ENCODE measurements at regions of chr7 and their contacts with region 1.

Region 1: GRCh38 chr7:47945261-47946001 is 2.8 kb downstream of the PKD1L1 start:
- DNase-seq: peak in 1 of 2 experiments; percentile 88
- H3K4me3 ChIP-seq: no peak overlapping the region
- H3K27ac ChIP-seq: no peak overlapping the region
- H3K4me1 ChIP-seq: peaks cover 0 to 9% (median 5%) of the 10 kb centered on the region in 4 experiments; a peak in 6 of 7 replicates
- H3K27me3 ChIP-seq: no peaks in the 10 kb centered on the region
- CTCF ChIP-seq: peak in 2 of 3 experiments; percentile 63 to 67; a peak in 3 of 4 replicates
- EP300 ChIP-seq: no peak
- POLR2A ChIP-seq: no peak
- RAD21 ChIP-seq: peak; percentile 75 to 79

Region 2: DNA sequence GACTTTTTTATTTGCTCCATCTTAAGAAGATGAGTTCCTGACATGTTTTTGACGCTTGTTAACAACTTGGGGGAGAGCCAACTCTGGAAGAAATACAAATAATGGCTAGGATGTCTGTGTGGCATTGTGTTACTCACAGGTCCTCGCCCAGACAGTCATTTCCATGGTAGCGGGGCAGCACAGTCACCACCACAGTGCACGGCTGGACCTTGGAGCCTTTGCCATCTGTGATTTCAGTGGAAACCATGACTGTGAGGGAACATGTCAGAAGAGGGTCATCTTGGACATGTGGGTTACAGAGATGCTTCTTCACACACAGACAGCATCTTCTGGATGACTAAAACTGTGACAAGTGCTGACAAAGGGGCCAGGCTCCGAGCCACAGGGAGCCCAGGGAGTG is 71.7 kb before region 1 on chr7:
- CTCF ChIA-PET with region 1: no interaction called
- POLR2A ChIA-PET with region 1: no interaction called
- DNase-seq: peak in 1 of 2 experiments; percentile 16
- H3K4me3 ChIP-seq: no peak overlapping the region
- H3K27ac ChIP-seq: no peak overlapping the region
- H3K4me1 ChIP-seq: no peaks in the 10 kb centered on the region; a peak in 2 of 7 replicates
- H3K27me3 ChIP-seq: no peaks in the 10 kb centered on the region
- CTCF ChIP-seq: no peak
- EP300 ChIP-seq: no peak
- POLR2A ChIP-seq: no peak
- RAD21 ChIP-seq: no peak

Region 3: DNA sequence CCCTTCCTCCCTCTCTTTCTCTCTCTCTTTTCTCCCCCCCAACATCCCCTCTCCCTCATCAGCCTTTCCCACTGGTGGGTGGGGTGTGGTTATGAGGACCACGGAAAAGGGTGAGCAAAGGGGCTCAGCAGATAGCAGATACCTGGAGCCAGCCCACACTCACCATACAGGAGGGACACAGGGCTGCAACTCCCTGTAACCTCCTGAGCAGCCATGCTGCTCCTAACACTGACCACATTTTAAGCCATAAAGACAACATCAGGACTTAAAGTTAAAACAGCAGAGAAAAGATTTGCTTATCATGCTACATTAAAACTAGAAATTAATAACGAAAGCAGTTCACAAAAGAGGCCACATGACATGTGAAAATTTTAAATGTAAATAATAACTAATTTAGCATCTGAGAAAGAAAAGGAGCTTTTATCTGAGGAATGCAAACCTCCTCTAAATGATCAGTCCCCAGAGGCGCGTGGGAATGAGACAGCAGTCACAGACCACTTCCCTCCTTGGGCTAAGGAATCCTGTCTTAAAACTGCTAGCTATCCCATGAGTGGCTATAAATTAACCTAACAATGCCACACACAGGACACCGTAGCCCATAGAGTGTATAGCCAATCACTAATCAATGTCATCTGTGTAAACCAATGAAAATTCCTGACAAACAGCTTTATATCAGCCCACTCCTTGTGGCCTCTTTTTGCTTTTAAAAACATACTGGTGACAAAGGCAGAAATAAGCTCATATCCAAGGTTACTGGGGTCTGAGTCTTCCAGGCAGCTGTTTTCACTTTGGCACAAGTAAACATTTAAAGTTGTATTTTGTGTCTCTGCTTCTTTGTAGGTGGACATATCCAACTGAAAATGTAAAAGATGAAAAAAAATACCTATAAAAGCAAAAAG is 30.5 kb before region 1 on chr7:
- CTCF ChIA-PET with region 1: interaction called, 17 read pairs
- POLR2A ChIA-PET with region 1: no interaction called
- DNase-seq: no peak
- H3K4me3 ChIP-seq: no peak overlapping the region
- H3K27ac ChIP-seq: no peak overlapping the region
- H3K4me1 ChIP-seq: peaks cover 0 to 8% (median 1%) of the 10 kb centered on the region in 4 experiments; a peak in 2 of 7 replicates
- H3K27me3 ChIP-seq: no peaks in the 10 kb centered on the region
- CTCF ChIP-seq: no peak
- EP300 ChIP-seq: no peak
- POLR2A ChIP-seq: no peak
- RAD21 ChIP-seq: no peak

Region 4: GRCh38 chr7:47932016-47932415 is 13.4 kb before region 1 on chr7:
- CTCF ChIA-PET with region 1: interaction called, 34 read pairs
- POLR2A ChIA-PET with region 1: interaction called, 4 read pairs
- DNase-seq: no peak
- H3K4me3 ChIP-seq: no peak overlapping the region
- H3K27ac ChIP-seq: no peak overlapping the region
- H3K4me1 ChIP-seq: no peaks in the 10 kb centered on the region; a peak in 1 of 7 replicates
- H3K27me3 ChIP-seq: no peaks in the 10 kb centered on the region
- CTCF ChIP-seq: no peak
- EP300 ChIP-seq: no peak
- POLR2A ChIP-seq: no peak
- RAD21 ChIP-seq: no peak

Region 5: GRCh38 chr7:47968847-47969774 is 23.7 kb after region 1 on chr7:
- CTCF ChIA-PET with region 1: interaction called, 16 read pairs
- POLR2A ChIA-PET with region 1: interaction called, 5 read pairs
- DNase-seq: peak; percentile 46 to 87
- H3K4me3 ChIP-seq: no peak overlapping the region
- H3K27ac ChIP-seq: no peak overlapping the region
- H3K4me1 ChIP-seq: no peaks in the 10 kb centered on the region
- H3K27me3 ChIP-seq: no peaks in the 10 kb centered on the region
- CTCF ChIP-seq: peak; percentile 76 to 95 (median 88)
- EP300 ChIP-seq: no peak
- POLR2A ChIP-seq: no peak
- RAD21 ChIP-seq: peak; percentile 83 to 84

Region 6: DNA sequence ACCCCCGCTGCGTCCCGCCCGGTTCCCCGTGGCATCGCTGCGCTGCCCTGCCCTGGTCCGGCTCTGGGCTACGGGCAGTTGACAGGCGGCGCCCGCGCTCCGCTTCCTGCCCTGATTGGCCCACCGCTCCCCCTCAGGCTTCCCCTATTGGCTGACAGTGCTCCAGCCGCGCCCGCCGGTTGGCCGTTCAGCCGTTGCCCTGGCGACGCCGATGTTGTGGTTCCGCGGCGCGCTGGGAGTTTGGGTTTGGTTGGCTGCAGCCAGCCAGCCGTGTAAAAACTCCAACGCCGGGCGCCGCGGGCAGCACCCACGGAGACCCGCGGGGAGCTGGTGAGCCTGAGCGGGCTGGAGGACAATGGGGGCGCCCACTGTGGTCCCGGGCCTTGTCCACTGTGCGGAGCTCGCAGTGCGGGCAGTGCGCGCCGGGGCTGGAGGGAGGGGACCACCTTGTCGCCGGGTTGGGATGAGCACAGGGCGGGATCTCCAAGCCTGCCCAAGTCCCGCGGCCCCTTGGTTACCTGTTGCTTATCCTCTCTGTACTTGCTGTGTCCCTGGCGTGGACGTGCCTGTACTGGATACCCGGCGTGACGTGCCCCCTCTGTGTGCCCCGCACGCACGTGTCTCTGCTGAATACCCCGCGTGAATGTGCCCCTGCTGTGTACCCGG is 90.0 kb after region 1 on chr7 and contains the start of gene C7orf57:
- CTCF ChIA-PET with region 1: no interaction called
- POLR2A ChIA-PET with region 1: no interaction called
- DNase-seq: peak; percentile 54 to 94
- H3K4me3 ChIP-seq: peak within 1 kb of the TSS; percentile 39 to 81 (median 72)
- H3K27ac ChIP-seq: no peak within 1 kb of the TSS
- H3K4me1 ChIP-seq: peaks cover 0 to 20% (median 13%) of the 10 kb centered on the region in 4 experiments; a peak in 6 of 7 replicates
- H3K27me3 ChIP-seq: peaks cover 11 to 31% (median 25%) of the 10 kb centered on the region in 4 experiments
- CTCF ChIP-seq: peak in 1 of 3 experiments; percentile 14; a peak in 1 of 4 replicates
- EP300 ChIP-seq: no peak
- POLR2A ChIP-seq: no peak
- RAD21 ChIP-seq: peak in 1 of 2 experiments; percentile 8; a peak in 1 of 4 replicates
- total RNA-seq, gene C7orf57: 0.27 and 0.56 TPM in 2 replicates

Region 7: DNA sequence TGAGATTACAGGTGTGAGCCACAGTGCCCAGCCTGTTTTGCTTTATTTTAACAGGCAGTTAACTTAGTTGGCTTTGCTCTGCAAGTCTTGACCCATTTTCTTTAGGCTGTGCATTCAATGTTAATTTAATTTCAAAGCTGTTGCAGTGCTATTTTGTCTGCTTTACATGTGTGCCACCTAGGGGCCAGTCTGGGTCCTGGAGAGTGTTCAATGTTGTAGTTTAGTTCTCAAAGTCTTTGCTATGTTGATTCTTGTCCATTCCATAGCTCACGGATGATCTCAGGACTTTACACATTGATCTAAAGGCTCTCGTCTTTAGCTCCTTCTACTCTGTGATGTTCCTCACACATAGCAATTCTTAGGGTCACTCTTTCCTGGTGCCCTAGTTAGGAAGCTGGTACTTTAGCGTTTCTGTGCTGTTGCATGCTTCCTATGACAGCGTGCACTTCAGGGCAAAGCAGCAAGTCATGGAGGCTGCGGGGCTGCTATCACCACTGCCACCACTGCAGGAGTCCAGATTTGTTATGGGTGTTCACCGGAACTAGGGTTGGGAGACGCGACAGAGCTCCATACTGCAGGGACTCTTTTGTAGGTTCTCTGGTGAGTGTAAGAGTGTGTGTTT is 209.5 kb after region 1 on chr7:
- CTCF ChIA-PET with region 1: interaction called, 26 read pairs
- POLR2A ChIA-PET with region 1: no interaction called
- DNase-seq: no peak
- H3K4me3 ChIP-seq: no peak overlapping the region
- H3K27ac ChIP-seq: no peak overlapping the region
- H3K4me1 ChIP-seq: no peaks in the 10 kb centered on the region
- H3K27me3 ChIP-seq: no peaks in the 10 kb centered on the region
- CTCF ChIP-seq: peak in 2 of 3 experiments; percentile 63 to 66; a peak in 3 of 4 replicates
- EP300 ChIP-seq: no peak
- POLR2A ChIP-seq: no peak
- RAD21 ChIP-seq: peak; percentile 75 to 81